Sciatic nerve (tissue), 2 donors: ENCODE measurements at regions of chr3 and their contacts with region 1.

Region 1: GRCh38 chr3:51501833-51502561 is 2.2 kb upstream of the DCAF1 start:
- DNase-seq: peak; percentile 90
- ATAC-seq: peak; percentile 40

Region 2: DNA sequence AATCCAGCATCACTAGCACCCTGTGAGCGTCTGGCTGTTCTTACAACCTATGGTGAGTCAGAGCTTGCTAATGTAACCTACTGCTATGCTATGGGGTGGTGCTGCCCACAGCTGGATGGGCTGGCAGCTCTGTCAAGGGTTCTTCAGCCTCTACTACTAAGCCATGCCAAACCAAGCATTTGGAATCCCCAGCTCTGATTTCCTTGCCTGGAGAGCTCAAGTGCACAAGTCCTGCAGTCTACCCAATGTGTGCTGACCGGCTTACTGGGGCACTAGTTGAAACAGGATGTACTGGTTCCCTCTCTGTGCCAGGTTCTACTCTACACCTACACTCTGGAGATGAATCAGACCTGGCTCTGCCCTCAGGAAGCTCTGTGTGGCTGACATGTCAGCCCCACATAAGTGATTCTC is 173.2 kb after region 1 on chr3:
- intact Hi-C with region 1: loop called (anchors 5 kb)
- DNase-seq: peak; percentile 6
- ATAC-seq: no peak

Region 3: GRCh38 chr3:51799879-51800749 is 298.1 kb after region 1 on chr3:
- intact Hi-C with region 1: loop called (anchors 10 kb)
- DNase-seq: no peak
- ATAC-seq: peak; percentile 63